A673 (cell line): ENCODE measurements at regions of chr12 and their contacts with region 1.

Region 1: DNA sequence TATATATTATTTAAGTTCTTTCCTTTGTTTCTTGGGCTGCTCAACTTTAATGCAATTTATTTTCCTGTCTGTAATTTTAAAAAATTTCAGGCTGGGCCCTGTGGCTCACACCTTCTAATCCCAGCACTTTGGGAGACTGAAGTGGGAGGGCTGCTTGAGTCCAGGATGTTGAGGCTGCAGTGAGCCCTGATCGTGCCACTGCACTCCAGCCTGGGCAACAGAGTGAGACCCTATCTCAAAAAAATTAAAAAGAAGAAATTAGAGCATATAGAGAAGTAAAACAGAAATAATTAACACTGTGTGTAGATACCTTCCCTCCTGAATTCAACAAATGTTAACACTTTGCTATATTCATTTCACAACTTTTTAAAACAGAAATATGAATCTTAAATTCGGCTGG is 74.2 kb downstream of the DENND5B start:
- DNase-seq: no peak
- H3K4me3 ChIP-seq: no peak overlapping the region
- H3K27ac ChIP-seq: no peak overlapping the region
- H3K4me1 ChIP-seq: peaks cover 10% of the 10 kb centered on the region
- H3K27me3 ChIP-seq: no peaks in the 10 kb centered on the region
- CTCF ChIP-seq: no peak

Region 2: DNA sequence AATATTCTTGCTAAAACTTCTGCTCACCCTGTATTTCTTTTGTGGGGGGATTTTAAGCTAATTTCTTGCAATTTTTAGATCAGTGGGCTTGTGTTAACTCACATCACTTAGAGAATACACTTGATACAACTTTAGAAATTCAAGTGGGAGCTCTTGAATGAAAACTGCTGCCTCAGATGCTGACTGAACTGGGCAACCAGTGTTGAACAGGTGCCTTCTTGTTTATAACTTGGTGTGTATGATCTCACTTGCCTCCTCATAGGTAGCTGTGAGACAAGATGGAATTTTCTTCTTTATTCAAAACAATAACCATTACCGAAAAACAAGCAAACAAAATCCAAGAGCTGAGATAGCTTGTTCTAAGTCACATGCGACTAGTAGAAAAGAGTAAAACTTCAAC is 946.2 kb after region 1 on chr12:
- CTCF ChIA-PET with region 1: no interaction called
- POLR2A ChIA-PET with region 1: interaction called, 18 read pairs
- intact Hi-C with region 1: no loop called
- DNase-seq: no peak
- H3K4me3 ChIP-seq: no peak overlapping the region
- H3K27ac ChIP-seq: no peak overlapping the region
- H3K4me1 ChIP-seq: no peaks in the 10 kb centered on the region
- H3K27me3 ChIP-seq: no peaks in the 10 kb centered on the region
- CTCF ChIP-seq: no peak